ENCODE measurements at regions of chr13 and their contacts with region 1.

Region 1: GRCh38 chr13:90103099-90103784 is 1244.2 kb upstream of the MIR17HG start:
- DNase-seq: no peak
- ATAC-seq: no peak
- H3K4me3 Mint-ChIP-seq: no peak overlapping the region
- H3K27ac Mint-ChIP-seq: no peak overlapping the region
- H3K4me1 Mint-ChIP-seq: no peaks in the 10 kb centered on the region
- H3K27me3 Mint-ChIP-seq: no peaks in the 10 kb centered on the region

Region 2: DNA sequence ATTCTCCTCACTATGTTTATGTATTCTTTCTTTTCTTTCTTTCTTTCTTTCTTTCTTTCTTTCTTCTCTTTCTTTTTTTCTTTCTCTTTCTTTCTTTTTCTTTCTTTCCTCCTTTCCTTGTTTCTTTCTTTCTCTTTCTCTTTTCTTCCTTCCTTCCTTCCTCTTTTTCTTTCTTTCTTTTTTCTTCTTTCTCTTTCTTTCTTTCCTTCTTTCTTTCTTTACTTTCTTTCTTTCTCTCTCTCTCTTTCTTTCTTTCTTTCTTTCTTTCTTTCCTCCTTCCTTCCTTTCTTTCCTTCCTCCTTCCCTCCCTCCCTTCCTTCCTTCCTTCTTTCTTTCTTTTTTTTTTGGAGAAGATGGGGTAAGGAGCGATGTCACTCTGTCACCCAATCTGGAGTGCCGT is 1026.6 kb before region 1 on chr13:
- CTCF ChIA-PET with region 1: no interaction called
- POLR2A ChIA-PET with region 1: no interaction called
- intact Hi-C with region 1: loop called in 1 of 2 experiments (anchors 5 kb)
- DNase-seq: no peak
- ATAC-seq: no peak
- H3K4me3 Mint-ChIP-seq: no peak overlapping the region
- H3K27ac Mint-ChIP-seq: no peak overlapping the region
- H3K4me1 Mint-ChIP-seq: no peaks in the 10 kb centered on the region
- H3K27me3 Mint-ChIP-seq: no peaks in the 10 kb centered on the region